ENCODE measurements at regions of chr7 and their contacts with region 1.

Region 1: GRCh38 chr7:120842121-120842621 is 15.8 kb downstream of the TSPAN12 start:
- DNase-seq: no peak
- H3K4me3 ChIP-seq: no peak overlapping the region
- H3K27ac ChIP-seq: no peak overlapping the region
- H3K4me1 ChIP-seq: peaks cover 0 to 14% (median 7%) of the 10 kb centered on the region in 4 experiments; a peak in 4 of 7 replicates
- H3K27me3 ChIP-seq: no peaks in the 10 kb centered on the region
- CTCF ChIP-seq: no peak
- EP300 ChIP-seq: no peak
- POLR2A ChIP-seq: no peak
- RAD21 ChIP-seq: no peak

Region 2: DNA sequence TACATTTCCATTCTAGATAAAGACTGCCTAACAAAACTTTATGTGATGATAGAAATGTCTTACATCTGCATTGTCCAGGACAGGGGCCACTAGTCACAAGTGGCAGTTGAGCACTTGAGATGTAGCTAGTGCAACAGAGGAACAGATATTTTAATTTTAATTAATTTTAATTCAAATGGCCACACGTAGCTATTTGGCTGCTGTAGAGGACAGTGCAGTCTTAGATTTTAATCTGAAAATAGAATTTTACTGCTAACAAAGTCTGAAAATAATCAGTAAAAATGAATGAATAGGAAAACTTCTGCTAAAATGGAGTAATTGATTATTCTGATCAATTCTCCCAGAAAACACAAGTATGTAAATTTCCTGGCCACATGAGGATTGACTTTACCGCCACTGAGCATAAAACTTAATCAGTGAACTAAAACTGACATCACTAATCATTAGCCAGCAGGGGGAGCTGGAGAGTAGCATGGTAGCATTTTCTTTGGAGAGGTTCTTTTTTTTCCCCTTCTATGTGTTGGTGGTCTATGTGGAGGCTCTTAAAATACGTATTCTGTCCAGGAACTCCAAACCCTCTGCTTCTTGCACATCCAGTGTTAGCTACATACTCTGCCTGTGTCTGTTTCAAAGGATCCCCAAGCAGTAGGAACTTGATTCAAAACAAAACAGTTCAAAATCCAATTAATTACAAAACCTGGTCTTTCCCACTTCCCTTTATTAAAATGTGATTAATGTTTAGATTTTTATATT is 36.4 kb before region 1 on chr7:
- CTCF ChIA-PET with region 1: interaction called, 16 read pairs
- POLR2A ChIA-PET with region 1: no interaction called
- DNase-seq: peak; percentile 31 to 80
- H3K4me3 ChIP-seq: no peak overlapping the region
- H3K27ac ChIP-seq: no peak overlapping the region
- H3K4me1 ChIP-seq: no peaks in the 10 kb centered on the region
- H3K27me3 ChIP-seq: no peaks in the 10 kb centered on the region
- CTCF ChIP-seq: peak in 2 of 3 experiments; percentile 68 to 79; a peak in 3 of 4 replicates
- EP300 ChIP-seq: no peak
- POLR2A ChIP-seq: no peak
- RAD21 ChIP-seq: peak; percentile 79 to 84

Region 3: GRCh38 chr7:120857588-120858573 is 15.7 kb after region 1 on chr7 and contains the start of gene TSPAN12:
- CTCF ChIA-PET with region 1: interaction called, 13 read pairs
- POLR2A ChIA-PET with region 1: interaction called, 7 read pairs
- DNase-seq: peak in 1 of 2 experiments; percentile 85
- H3K4me3 ChIP-seq: peak within 1 kb of the TSS; percentile 60 to 78 (median 68)
- H3K27ac ChIP-seq: peak within 1 kb of the TSS; percentile 35; the same call in 1 of the 2 replicates
- H3K4me1 ChIP-seq: peaks cover 0 to 5% (median 0%) of the 10 kb centered on the region in 4 experiments; a peak in 2 of 7 replicates
- H3K27me3 ChIP-seq: no peaks in the 10 kb centered on the region
- CTCF ChIP-seq: peak; percentile 58 to 68 (median 67)
- EP300 ChIP-seq: no peak
- POLR2A ChIP-seq: peak; percentile 62 to 75
- RAD21 ChIP-seq: peak; percentile 49 to 65; a peak in 3 of 4 replicates
- total RNA-seq, gene TSPAN12: 15.9 and 17.9 TPM in 2 replicates